Activated CD8-positive, alpha-beta T cell treated with anti-CD3 and anti-CD28 coated beads, Interleukin-2, amount 10 ng/mL, durations not matched to agents 7 days and 5 days (primary cell): ENCODE measurements at regions of chr11 and their contacts with region 1.

Region 1: DNA sequence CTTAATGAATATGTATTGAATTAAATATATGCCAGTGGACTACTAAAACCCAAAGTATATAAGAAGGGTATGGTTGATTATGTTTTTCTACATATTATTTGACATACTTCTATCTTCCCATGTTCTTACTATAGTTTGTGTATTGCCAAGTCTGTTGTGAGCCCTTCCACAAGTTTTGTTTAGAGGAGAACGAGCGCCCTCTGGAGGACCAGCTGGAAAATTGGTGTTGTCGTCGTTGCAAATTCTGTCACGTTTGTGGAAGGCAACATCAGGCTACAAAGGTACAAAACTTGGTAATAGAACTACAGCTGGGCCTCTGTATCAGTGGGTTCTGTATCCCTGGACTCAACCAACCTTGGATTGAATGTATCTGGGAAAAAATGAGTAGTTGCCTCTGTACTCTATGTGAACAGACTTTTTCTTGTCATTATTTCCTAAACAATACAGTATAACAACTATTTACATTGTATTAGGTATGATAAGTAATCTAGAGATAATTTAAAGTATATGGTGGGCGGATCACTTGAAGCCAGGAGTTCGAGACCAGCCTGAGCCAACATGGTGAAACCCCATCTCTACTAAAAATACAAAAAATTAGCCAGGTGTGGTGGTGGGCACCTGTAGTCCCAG is 38.7 kb upstream of the TTC36 start:
- DNase-seq: peak; percentile 86
- ATAC-seq: peak; percentile 64
- H3K4me3 Mint-ChIP-seq: no peak overlapping the region
- H3K27ac Mint-ChIP-seq: no peak overlapping the region
- H3K4me1 Mint-ChIP-seq: no peaks in the 10 kb centered on the region
- H3K27me3 Mint-ChIP-seq: no peaks in the 10 kb centered on the region

Region 2: GRCh38 chr11:118401151-118401878 is 87.3 kb before region 1 on chr11 and contains the start of gene ATP5MG:
- CTCF ChIA-PET with region 1: interaction called, 18 read pairs
- POLR2A ChIA-PET with region 1: no interaction called
- DNase-seq: peak; percentile 96
- ATAC-seq: peak; percentile 59
- H3K4me3 Mint-ChIP-seq: peak within 1 kb of the TSS; percentile 98
- H3K27ac Mint-ChIP-seq: peak within 1 kb of the TSS; percentile 100
- H3K4me1 Mint-ChIP-seq: peaks cover 69% of the 10 kb centered on the region
- H3K27me3 Mint-ChIP-seq: no peaks in the 10 kb centered on the region
- total RNA-seq, gene ATP5MG: 275 to 298 TPM

Region 3: DNA sequence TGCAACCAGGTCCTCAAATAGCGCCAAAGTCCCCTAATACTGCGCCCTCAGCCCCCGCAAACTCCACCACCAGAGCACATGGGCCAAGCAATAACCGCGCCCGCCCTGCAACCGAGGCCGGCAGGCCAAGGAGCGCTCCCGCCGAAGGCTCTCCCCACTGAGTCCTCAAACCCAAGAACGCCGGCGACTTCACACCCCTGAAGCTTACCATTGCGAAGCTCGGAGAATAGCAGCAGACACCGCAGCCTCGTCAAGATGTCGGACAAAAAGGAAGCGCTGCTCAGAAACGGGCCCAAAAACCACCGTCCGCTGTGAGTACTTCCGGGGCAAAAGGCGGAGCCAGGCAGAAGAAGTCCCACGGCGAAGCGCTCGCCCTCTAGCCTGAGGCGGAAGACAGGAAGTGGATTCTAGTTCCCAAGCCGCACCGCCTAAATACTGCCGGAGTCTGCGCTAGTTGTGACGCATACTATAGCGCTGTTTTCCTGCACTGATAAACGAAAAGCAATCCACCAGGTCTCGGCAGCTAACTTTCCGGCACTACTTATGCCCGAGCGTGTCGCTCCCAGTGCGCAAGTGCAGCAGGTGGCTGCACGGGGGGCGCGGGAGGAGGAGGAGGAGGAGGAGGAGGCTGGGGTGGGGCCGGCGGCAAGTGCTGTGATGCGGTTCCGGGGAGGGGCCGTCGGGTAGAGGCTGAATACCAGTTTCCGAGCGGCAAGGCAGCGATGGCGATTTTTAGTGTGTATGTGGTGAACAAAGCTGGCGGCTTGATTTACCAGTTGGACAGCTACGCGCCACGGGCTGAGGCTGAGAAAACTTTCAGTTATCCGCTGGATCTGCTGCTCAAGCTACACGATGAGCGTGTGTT is 529.7 kb after region 1 on chr11 and contains the starts of genes RPS25 and TRAPPC4:
- CTCF ChIA-PET with region 1: no interaction called
- POLR2A ChIA-PET with region 1: no interaction called
- DNase-seq: peak; percentile 98
- ATAC-seq: peak; percentile 93
- H3K4me3 Mint-ChIP-seq: peak within 1 kb of the TSS; percentile 99
- H3K27ac Mint-ChIP-seq: peak within 1 kb of the TSS; percentile 100
- H3K4me1 Mint-ChIP-seq: peaks cover 48% of the 10 kb centered on the region
- H3K27me3 Mint-ChIP-seq: no peaks in the 10 kb centered on the region
- total RNA-seq, gene RPS25: 1,115 to 1,170 TPM
- total RNA-seq, gene TRAPPC4: 58.6 to 65.0 TPM